ENCODE measurements at regions of chr17 and their contacts with region 1.

Region 1: DNA sequence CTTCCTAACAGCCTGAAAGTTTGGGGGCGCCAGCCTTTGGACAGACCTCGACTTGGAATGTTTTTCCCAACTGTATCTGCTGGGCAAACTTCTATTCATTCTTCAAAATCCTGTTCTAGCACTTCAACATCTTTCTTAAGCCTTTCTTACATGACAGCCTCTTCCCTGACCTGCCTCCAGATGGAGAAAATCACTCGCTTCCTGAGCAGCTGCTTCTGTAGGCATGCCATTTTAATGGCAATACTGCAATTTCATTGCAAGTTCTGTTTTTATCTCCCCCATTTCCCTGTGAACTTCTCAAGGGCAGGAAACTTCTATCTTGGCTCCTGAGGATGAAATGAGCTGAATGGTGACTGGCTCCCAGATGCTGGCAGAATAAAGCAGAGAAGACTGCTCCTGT is 128.8 kb upstream of the ASIC2 start:
- DNase-seq: no peak
- H3K4me3 ChIP-seq: no peak overlapping the region
- H3K27ac ChIP-seq: no peak overlapping the region
- H3K4me1 ChIP-seq: peaks cover 12% of the 10 kb centered on the region
- H3K27me3 ChIP-seq: no peaks in the 10 kb centered on the region
- CTCF ChIP-seq: no peak

Region 2: DNA sequence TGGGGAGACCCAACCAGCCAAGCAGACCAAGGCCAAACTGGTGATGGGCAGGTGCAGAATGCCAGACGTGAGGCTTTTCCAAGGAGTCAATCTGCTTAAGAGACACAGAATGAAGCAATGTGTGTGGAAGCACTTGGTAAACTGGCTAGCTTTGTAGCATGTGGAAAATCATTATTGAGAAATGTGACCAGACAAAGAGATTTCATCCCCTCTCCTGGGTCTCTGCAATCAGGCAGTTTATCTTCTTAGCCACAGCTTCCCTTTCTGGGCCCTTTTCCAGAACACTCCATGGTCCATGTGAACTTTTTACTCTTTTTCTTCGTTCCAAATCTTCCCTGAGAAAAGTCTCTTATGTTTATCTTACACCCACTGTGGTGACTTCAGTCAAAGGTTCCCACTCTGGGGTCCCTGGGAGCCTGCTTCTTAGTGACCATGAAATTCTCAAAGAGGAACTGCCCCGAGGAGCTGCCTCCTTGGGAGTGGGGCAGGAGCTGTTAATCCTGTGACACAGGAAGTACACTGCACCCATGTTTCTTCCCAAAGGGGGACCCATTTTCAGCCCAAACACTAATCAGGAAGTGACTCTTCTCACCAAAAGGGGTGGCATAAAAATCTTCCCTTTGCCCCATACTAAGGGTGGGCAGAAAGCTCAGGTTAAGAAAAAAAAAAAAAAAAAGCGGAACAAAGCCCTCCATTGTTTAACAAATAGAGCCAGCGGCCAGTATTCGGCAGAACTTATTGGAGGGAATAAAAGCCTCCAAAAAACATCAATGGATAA is 217.4 kb after region 1 on chr17:
- CTCF ChIA-PET with region 1: no interaction called
- POLR2A ChIA-PET with region 1: interaction called, 11 read pairs
- intact Hi-C with region 1: no loop called
- DNase-seq: peak; percentile 0
- H3K4me3 ChIP-seq: no peak overlapping the region
- H3K27ac ChIP-seq: no peak overlapping the region
- H3K4me1 ChIP-seq: no peaks in the 10 kb centered on the region
- H3K27me3 ChIP-seq: peaks cover 6% of the 10 kb centered on the region
- CTCF ChIP-seq: no peak

Measured in A673 (cell line).